Mammary epithelial cell (primary cell): ENCODE measurements at regions of chr3 and their contacts with region 1.

Region 1: GRCh38 chr3:99145031-99145430 is 243.5 kb upstream of the DCBLD2 start:
- DNase-seq: peak; percentile 21
- H3K4me3 ChIP-seq: no peak overlapping the region
- H3K27ac ChIP-seq: no peak overlapping the region
- H3K4me1 ChIP-seq: no peaks in the 10 kb centered on the region
- H3K27me3 ChIP-seq: no peaks in the 10 kb centered on the region
- CTCF ChIP-seq: no peak

Region 2: GRCh38 chr3:98274914-98275313 is 870.1 kb before region 1 on chr3:
- CTCF ChIA-PET with region 1: no interaction called
- dilution Hi-C with region 1: no loop called
- in situ Hi-C with region 1: no loop called
- intact Hi-C with region 1: no loop called
- DNase-seq: no peak
- H3K4me3 ChIP-seq: no peak overlapping the region
- H3K27ac ChIP-seq: no peak overlapping the region
- H3K4me1 ChIP-seq: no peaks in the 10 kb centered on the region
- H3K27me3 ChIP-seq: no peaks in the 10 kb centered on the region
- CTCF ChIP-seq: no peak

Region 3: DNA sequence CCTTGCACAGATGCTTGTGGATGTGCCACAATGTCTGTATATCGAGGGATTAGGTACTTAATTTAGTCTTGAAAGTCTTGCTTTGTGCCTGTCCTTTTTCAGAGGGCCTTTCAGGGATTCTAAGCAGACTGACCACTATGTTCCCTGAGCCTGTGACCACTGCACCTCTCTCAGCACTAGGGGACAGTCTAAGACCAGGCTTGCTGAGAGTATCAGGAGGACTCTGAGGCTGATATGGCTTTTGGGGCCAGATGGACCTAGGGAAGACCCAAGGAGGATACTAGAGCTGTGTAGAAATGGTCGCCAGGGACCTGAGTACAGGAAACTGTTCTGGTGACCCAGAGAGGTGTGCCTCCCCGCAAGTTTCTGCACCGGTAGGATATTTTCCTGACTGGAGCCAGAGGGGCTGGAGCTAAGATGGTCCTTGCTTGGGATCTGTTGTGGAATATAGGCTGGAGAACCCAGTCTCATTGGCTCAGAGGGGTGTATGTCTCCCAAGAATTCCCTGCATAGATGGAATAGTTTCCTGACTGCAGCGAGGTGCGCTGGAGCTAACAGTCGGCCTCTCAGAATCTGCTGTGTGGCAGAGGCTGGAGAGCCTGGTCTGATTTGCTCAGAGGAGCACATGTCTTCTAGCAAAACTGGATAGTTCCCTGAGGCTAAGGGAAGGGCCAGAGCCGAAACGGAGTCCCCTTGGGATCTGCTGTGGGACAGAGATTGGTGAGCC is 30.3 kb before region 1 on chr3:
- CTCF ChIA-PET with region 1: no interaction called
- dilution Hi-C with region 1: no loop called
- in situ Hi-C with region 1: no loop called
- intact Hi-C with region 1: no loop called
- DNase-seq: peak; percentile 60
- H3K4me3 ChIP-seq: no peak overlapping the region
- H3K27ac ChIP-seq: no peak overlapping the region
- H3K4me1 ChIP-seq: peaks cover 5% of the 10 kb centered on the region
- H3K27me3 ChIP-seq: no peaks in the 10 kb centered on the region
- CTCF ChIP-seq: peak; percentile 94 to 96

Region 4: GRCh38 chr3:99256788-99257187 is 111.8 kb after region 1 on chr3:
- CTCF ChIA-PET with region 1: no interaction called
- dilution Hi-C with region 1: loop called (anchors 5 kb)
- in situ Hi-C with region 1: no loop called
- intact Hi-C with region 1: no loop called
- DNase-seq: no peak
- H3K4me3 ChIP-seq: no peak overlapping the region
- H3K27ac ChIP-seq: no peak overlapping the region
- H3K4me1 ChIP-seq: no peaks in the 10 kb centered on the region
- H3K27me3 ChIP-seq: no peaks in the 10 kb centered on the region
- CTCF ChIP-seq: no peak

Region 5: GRCh38 chr3:99286266-99286845 is 141.3 kb after region 1 on chr3:
- CTCF ChIA-PET with region 1: no interaction called
- dilution Hi-C with region 1: no loop called
- in situ Hi-C with region 1: no loop called
- intact Hi-C with region 1: no loop called
- DNase-seq: peak; percentile 20
- H3K4me3 ChIP-seq: no peak overlapping the region
- H3K27ac ChIP-seq: no peak overlapping the region
- H3K4me1 ChIP-seq: no peaks in the 10 kb centered on the region
- H3K27me3 ChIP-seq: peaks cover 2% of the 10 kb centered on the region
- CTCF ChIP-seq: no peak

Region 6: DNA sequence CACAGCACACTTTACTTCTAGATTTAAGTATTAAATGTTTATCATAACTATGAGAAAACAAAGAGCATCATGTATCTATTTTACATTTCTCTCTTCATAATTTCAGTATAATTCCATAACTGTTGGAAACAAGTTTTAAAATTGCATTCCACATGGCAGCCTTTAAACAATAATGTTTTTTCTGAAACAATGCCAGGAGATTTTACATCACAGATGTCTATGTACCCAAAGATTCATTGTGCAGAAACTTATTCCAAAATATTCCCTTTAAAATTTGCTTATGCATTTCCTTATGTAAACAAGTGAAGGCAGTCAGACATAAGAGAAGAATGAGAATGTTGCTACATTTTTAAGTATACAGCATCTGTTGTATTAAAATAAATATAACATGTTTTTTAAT is 168.5 kb after region 1 on chr3:
- CTCF ChIA-PET with region 1: no interaction called
- dilution Hi-C with region 1: no loop called
- in situ Hi-C with region 1: no loop called
- intact Hi-C with region 1: no loop called
- DNase-seq: no peak
- H3K4me3 ChIP-seq: no peak overlapping the region
- H3K27ac ChIP-seq: no peak overlapping the region
- H3K4me1 ChIP-seq: no peaks in the 10 kb centered on the region
- H3K27me3 ChIP-seq: no peaks in the 10 kb centered on the region
- CTCF ChIP-seq: no peak